ENCODE measurements at regions of chr1 and their contacts with region 1.

Region 1: DNA sequence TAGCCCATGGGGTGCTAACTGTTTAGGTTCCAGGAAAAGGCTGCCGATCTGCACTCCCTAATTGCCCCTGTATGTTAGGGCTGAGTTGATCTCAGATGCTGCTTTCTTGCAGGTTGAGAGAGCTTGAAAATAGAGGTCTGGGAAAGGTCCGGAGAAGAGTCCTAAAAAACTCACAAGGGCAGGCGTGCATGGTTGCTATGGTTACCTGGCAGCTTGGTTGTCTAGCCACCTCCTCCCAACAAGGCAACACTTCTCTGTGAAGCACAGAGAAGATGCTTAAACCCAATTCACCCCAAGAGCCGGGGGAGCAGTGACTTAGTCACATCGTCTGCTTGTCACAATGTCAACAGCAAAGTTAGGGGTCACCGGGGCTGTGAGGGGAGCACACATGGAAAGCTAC is 31.0 kb upstream of the LRRC52 start:
- DNase-seq: no peak
- H3K4me3 Mint-ChIP-seq: no peak overlapping the region
- H3K27ac Mint-ChIP-seq: no peak overlapping the region
- H3K4me1 Mint-ChIP-seq: no peaks in the 10 kb centered on the region
- H3K27me3 Mint-ChIP-seq: peaks cover 11% of the 10 kb centered on the region

Region 2: GRCh38 chr1:165575468-165576099 is 62.8 kb after region 1 on chr1:
- intact Hi-C with region 1: loop called (anchors 10 kb)
- DNase-seq: no peak
- H3K4me3 Mint-ChIP-seq: no peak overlapping the region
- H3K27ac Mint-ChIP-seq: no peak overlapping the region
- H3K4me1 Mint-ChIP-seq: no peaks in the 10 kb centered on the region
- H3K27me3 Mint-ChIP-seq: peaks cover 30% of the 10 kb centered on the region

Measured in activated T-helper 1 cell treated with anti-CD3 and anti-CD28 coated beads, Interleukin-12 subunit alpha, Interleukin-12 subunit beta, Interleukin-2, Interleukin-4 antibody, amounts not matched to agents 30 ng/mL and 10 ng/mL and 1 ng/mL, durations not matched to agents 14 hours and 24 hours and 36 hours (primary cell).